Ovary (tissue), 10 donors: ENCODE measurements at regions of chr2 and their contacts with region 1.

Region 1: GRCh38 chr2:227766373-227766883 is 20.7 kb downstream of the SCYGR8 start:
- DNase-seq: peak; percentile 68 to 82 (median 76)
- H3K4me3 ChIP-seq: no peak overlapping the region
- H3K27ac ChIP-seq: no peak overlapping the region
- H3K4me1 ChIP-seq: no peaks in the 10 kb centered on the region
- H3K27me3 ChIP-seq: no peaks in the 10 kb centered on the region
- CTCF ChIP-seq: peak; percentile 58 to 80 (median 80)
- EP300 ChIP-seq: no peak
- POLR2A ChIP-seq: no peak

Region 2: DNA sequence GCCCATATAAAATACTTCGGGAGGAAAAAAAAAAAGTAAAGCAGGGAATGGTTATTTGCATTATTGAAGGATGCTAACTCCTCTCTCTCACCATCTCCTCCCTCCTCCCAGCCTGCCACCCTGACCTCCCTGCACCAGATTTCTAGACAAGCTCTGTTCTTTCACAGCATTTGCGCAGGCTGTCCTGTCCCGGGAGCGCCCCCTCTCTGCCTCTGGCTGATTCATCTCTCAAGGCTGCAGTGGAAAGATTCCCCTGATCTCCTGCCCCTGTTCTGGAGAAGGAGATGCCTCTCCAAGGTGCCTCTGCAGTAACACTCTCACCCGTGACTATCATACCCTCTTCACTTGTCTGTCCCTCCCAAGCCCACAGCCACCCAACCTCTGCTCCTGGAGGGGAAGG is 640.9 kb before region 1 on chr2:
- intact Hi-C with region 1: loop called in 2 of 4 experiments (anchors 5 to 10 kb)
- DNase-seq: no peak
- H3K4me3 ChIP-seq: no peak overlapping the region
- H3K27ac ChIP-seq: no peak overlapping the region
- H3K4me1 ChIP-seq: no peaks in the 10 kb centered on the region
- H3K27me3 ChIP-seq: no peaks in the 10 kb centered on the region
- CTCF ChIP-seq: no peak
- EP300 ChIP-seq: no peak
- POLR2A ChIP-seq: no peak

Region 3: GRCh38 chr2:227132986-227133385 is 633.4 kb before region 1 on chr2:
- intact Hi-C with region 1: loop called in 2 of 4 experiments (anchors 5 to 10 kb)
- DNase-seq: no peak
- H3K4me3 ChIP-seq: no peak overlapping the region
- H3K27ac ChIP-seq: no peak overlapping the region
- H3K4me1 ChIP-seq: peaks cover 4% of the 10 kb centered on the region
- H3K27me3 ChIP-seq: no peaks in the 10 kb centered on the region
- CTCF ChIP-seq: no peak
- EP300 ChIP-seq: no peak
- POLR2A ChIP-seq: no peak

Region 4: GRCh38 chr2:227363756-227364155 is 402.7 kb before region 1 on chr2:
- intact Hi-C with region 1: no loop called
- DNase-seq: no peak
- H3K4me3 ChIP-seq: no peak overlapping the region
- H3K27ac ChIP-seq: no peak overlapping the region
- H3K4me1 ChIP-seq: no peaks in the 10 kb centered on the region
- H3K27me3 ChIP-seq: no peaks in the 10 kb centered on the region
- CTCF ChIP-seq: no peak
- EP300 ChIP-seq: no peak
- POLR2A ChIP-seq: no peak

Region 5: GRCh38 chr2:227406177-227407031 is 360.0 kb before region 1 on chr2:
- intact Hi-C with region 1: loop called in 2 of 4 experiments (anchors 2 to 10 kb)
- DNase-seq: peak; percentile 63 to 73 (median 64)
- H3K4me3 ChIP-seq: no peak overlapping the region
- H3K27ac ChIP-seq: peak overlapping the region in 1 of 2 donors; percentile 41
- H3K4me1 ChIP-seq: peaks cover 4% of the 10 kb centered on the region
- H3K27me3 ChIP-seq: no peaks in the 10 kb centered on the region
- CTCF ChIP-seq: peak; percentile 30 to 49 (median 46)
- EP300 ChIP-seq: no peak
- POLR2A ChIP-seq: no peak

Region 6: GRCh38 chr2:227479865-227480475 is 286.5 kb before region 1 on chr2:
- intact Hi-C with region 1: loop called in 1 of 4 experiments (anchors 10 kb)
- DNase-seq: no peak
- H3K4me3 ChIP-seq: no peak overlapping the region
- H3K27ac ChIP-seq: no peak overlapping the region
- H3K4me1 ChIP-seq: peaks cover 2% of the 10 kb centered on the region
- H3K27me3 ChIP-seq: no peaks in the 10 kb centered on the region
- CTCF ChIP-seq: peak in 1 of 3 donors; percentile 10
- EP300 ChIP-seq: no peak
- POLR2A ChIP-seq: no peak

Region 7: DNA sequence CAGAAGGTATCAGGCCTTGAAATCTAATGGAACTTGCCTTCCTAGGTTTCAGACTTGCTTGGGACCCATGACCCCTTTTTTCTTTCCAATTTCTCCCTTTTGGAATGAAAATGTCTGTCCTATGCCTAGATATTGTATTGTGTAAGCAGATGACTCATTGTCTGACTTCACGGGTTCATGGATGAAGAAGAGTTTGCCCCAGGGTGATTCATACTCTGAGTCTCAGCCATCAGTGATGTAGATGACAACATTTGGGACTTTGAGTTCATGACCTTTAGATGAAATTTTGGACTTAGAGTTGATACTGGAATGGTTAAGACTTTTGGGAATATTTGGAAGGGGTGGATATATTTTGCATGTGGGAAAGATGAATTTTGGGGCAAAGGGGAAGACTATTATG is 111.0 kb before region 1 on chr2:
- intact Hi-C with region 1: loop called (anchors 2 to 5 kb)
- DNase-seq: no peak
- H3K4me3 ChIP-seq: no peak overlapping the region
- H3K27ac ChIP-seq: no peak overlapping the region
- H3K4me1 ChIP-seq: no peaks in the 10 kb centered on the region
- H3K27me3 ChIP-seq: no peaks in the 10 kb centered on the region
- CTCF ChIP-seq: no peak
- EP300 ChIP-seq: no peak
- POLR2A ChIP-seq: no peak

Region 8: GRCh38 chr2:227661019-227661649 is 105.3 kb before region 1 on chr2:
- intact Hi-C with region 1: loop called (anchors 2 to 5 kb)
- DNase-seq: no peak
- H3K4me3 ChIP-seq: no peak overlapping the region
- H3K27ac ChIP-seq: no peak overlapping the region
- H3K4me1 ChIP-seq: no peaks in the 10 kb centered on the region
- H3K27me3 ChIP-seq: no peaks in the 10 kb centered on the region
- CTCF ChIP-seq: no peak
- EP300 ChIP-seq: no peak
- POLR2A ChIP-seq: no peak

Region 9: DNA sequence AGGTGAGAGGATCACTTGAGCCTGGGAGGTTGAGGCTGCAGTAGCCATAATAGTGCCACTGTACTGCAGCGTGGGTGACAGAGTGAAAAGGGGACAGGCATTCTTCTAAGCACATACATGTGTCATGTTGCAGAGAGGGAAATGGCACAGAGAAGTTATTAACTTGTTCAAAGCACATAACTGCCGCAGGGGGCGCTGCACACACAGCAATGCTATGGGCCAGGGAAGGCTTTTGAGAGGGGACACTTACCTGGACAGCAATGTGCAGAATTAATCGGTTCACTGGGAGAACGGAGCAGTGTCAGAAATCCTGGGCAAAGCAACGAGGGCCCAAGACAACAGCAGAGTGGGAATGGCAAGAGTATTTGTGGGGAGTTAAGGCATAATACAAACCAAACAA is 18.3 kb before region 1 on chr2:
- intact Hi-C with region 1: no loop called
- DNase-seq: no peak
- H3K4me3 ChIP-seq: no peak overlapping the region
- H3K27ac ChIP-seq: no peak overlapping the region
- H3K4me1 ChIP-seq: no peaks in the 10 kb centered on the region
- H3K27me3 ChIP-seq: no peaks in the 10 kb centered on the region
- CTCF ChIP-seq: no peak
- EP300 ChIP-seq: no peak
- POLR2A ChIP-seq: no peak

Region 10: DNA sequence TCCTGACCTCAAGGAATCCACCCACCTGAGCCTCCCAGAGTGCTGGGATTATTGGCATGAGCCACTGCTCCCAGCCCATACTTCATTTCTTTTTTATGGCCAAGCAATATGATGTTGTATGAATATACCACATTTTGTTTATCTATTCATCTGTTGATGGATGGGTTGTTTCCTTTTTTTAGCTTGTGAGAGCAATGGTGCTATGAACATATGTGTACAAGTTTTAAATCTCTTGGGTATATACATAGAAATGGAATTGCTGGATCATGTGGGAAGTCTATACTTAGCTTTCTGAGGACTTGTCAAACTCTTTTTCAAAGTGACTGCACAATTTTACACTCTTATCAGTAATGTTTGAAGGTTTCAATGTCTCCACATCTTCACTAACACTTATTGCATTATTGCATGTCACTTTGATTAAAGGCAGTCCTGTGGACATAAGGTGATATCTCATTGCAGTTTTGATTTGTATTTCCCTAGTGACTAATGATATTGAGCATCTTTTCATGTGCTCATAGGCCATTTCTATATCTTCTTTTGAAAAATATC is 582.2 kb after region 1 on chr2:
- intact Hi-C with region 1: no loop called
- DNase-seq: no peak
- H3K4me3 ChIP-seq: no peak overlapping the region
- H3K27ac ChIP-seq: no peak overlapping the region
- H3K4me1 ChIP-seq: no peaks in the 10 kb centered on the region
- H3K27me3 ChIP-seq: no peaks in the 10 kb centered on the region
- CTCF ChIP-seq: no peak
- EP300 ChIP-seq: no peak
- POLR2A ChIP-seq: no peak